ENCODE measurements at regions of chr1 and their contacts with region 1.

Region 1: GRCh38 chr1:247131236-247131635 is 27.1 kb upstream of the ZNF669 start:
- DNase-seq: no peak
- H3K4me3 ChIP-seq: no peak overlapping the region
- H3K27ac ChIP-seq: no peak overlapping the region
- H3K4me1 ChIP-seq: no peaks in the 10 kb centered on the region
- H3K27me3 ChIP-seq: no peaks in the 10 kb centered on the region
- CTCF ChIP-seq: no peak

Region 2: DNA sequence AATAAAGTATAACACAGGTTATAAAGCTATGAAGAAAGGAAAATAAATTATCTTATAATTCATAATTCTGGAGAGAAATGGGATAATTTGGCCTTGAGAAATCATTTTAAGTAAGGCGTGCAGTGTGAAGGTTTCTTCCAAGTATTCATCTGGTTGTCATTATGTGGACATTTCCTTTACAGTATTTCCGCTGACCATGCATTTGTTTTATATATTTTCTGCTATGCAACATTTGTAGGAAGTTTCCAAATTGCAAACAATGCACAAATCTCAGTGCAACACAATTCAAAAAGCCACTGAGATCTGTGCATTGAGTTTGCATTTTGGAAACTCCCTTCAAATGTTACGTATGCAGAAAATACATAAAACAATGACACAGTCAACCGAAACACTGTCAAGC is 70.5 kb before region 1 on chr1:
- CTCF ChIA-PET with region 1: no interaction called
- dilution Hi-C with region 1: no loop called
- in situ Hi-C with region 1: no loop called
- intact Hi-C with region 1: no loop called
- DNase-seq: no peak
- H3K4me3 ChIP-seq: no peak overlapping the region
- H3K27ac ChIP-seq: no peak overlapping the region
- H3K4me1 ChIP-seq: no peaks in the 10 kb centered on the region
- H3K27me3 ChIP-seq: no peaks in the 10 kb centered on the region
- CTCF ChIP-seq: no peak

Region 3: DNA sequence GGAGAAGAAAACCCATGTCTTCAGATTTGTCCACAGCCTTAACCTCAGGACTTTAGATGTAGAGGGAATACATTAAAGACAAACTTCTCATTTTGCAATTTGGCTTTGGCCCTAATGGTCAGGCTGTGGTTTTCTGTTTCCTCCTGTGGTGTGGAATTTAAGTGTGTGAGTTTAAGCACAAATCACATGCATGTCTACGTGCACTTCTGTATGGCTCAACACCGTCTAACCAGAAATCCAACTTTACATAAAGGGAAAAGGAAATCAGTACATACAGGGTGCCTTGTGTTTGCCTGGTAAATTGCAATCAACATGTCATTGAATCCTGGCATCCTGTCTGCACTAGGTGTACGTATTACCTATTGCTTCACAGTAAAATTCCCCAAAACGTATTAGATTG is 41.8 kb after region 1 on chr1:
- CTCF ChIA-PET with region 1: no interaction called
- dilution Hi-C with region 1: no loop called
- in situ Hi-C with region 1: no loop called
- intact Hi-C with region 1: loop called (anchors 2 kb)
- DNase-seq: no peak
- H3K4me3 ChIP-seq: no peak overlapping the region
- H3K27ac ChIP-seq: no peak overlapping the region
- H3K4me1 ChIP-seq: no peaks in the 10 kb centered on the region
- H3K27me3 ChIP-seq: no peaks in the 10 kb centered on the region
- CTCF ChIP-seq: no peak